Naive thymus-derived CD4-positive, alpha-beta T cell (primary cell): ENCODE measurements at regions of chr9 and their contacts with region 1.

Region 1: DNA sequence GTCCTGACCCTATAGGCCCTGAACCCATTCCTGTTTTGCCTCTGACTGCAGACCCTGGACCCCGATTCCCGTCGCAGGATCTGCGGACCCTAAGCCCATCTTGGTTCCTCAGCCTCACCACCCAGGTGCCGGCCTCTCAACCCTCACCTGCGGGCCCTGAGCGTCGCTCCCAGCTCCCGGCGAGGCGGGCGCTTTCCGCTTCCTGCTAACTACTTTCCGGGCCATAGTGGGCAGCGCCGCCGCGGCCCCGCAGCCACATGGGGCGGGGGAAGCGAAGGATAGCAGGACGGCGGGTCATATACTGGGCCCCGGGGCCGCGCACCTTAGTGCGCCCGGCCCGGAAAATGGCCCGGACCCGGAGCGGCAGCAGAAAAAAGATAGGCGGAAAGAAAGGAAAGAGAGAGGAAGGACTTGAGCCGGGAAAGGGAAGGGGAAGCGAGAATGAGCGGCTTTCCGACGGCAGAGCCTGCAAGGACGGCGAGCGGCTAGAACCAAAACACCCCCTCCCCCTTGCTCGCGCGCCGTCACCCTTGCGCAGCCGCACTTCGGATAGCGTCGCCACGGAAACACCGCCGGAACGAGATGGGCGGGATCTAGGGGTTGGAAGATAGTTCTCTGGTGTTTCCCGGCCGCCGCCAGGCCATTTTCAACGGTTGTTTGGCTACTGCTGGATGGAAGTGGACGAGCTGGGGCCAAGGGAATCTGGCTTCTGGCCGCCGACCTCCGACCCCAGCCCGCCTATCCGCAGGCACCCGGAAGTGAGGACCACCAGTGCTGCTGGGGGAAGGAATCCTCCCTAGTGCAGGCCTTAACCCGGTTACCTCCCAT is at the start of gene DCAF12:
- DNase-seq: peak; percentile 84 to 92 (median 89)
- ATAC-seq: peak; percentile 96
- H3K4me3 ChIP-seq: peak within 1 kb of the TSS; percentile 92
- H3K4me3 Mint-ChIP-seq: peak within 1 kb of the TSS; percentile 92 to 99 (median 98)
- H3K27ac ChIP-seq: peak within 1 kb of the TSS; percentile 93
- H3K27ac Mint-ChIP-seq: peak within 1 kb of the TSS; percentile 94 to 99 (median 98)
- H3K4me1 ChIP-seq: peaks cover 24 to 34% of the 10 kb centered on the region in 2 donors
- H3K4me1 Mint-ChIP-seq: peaks cover 39 to 56% (median 44%) of the 10 kb centered on the region in 7 donors
- H3K27me3 ChIP-seq: no peaks in the 10 kb centered on the region
- H3K27me3 Mint-ChIP-seq: peaks cover 0 to 2% (median 0%) of the 10 kb centered on the region in 5 donors
- total RNA-seq, gene DCAF12: 10.8 to 40.4 (median 28.5) TPM

Region 2: DNA sequence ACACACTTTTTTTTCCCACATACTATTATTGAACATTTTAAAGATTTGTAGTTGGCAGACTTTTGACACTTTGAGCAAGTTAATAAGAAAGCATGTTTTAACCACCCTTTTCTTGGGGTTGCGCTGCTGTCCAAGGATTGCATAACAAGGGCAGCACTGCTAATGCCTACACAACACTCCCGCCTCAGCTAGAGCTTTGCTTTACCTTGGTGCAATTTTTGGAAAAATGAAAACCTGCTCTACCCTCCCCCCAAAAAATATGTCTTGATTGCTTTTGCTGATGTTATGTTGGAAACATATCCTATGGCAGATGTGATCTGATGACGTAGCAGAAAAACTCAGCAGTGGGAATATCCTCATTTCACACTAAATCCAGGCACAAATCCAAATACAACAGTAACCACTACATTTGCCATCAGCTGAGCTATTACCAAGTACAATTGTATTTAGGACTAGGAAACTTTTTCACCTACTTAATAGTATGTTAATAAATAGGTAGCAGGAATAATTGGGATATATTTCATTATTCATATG is 257.9 kb before region 1 on chr9:
- CTCF ChIA-PET with region 1: no interaction called
- POLR2A ChIA-PET with region 1: no interaction called
- intact Hi-C with region 1: no loop called
- DNase-seq: no peak
- ATAC-seq: no peak
- H3K4me3 ChIP-seq: no peak overlapping the region
- H3K4me3 Mint-ChIP-seq: no peak overlapping the region
- H3K27ac ChIP-seq: no peak overlapping the region
- H3K27ac Mint-ChIP-seq: peak overlapping the region in 1 of 9 donors; percentile 8
- H3K4me1 ChIP-seq: no peaks in the 10 kb centered on the region
- H3K4me1 Mint-ChIP-seq: peaks cover 13 to 39% (median 36%) of the 10 kb centered on the region in 7 donors
- H3K27me3 ChIP-seq: no peaks in the 10 kb centered on the region
- H3K27me3 Mint-ChIP-seq: no peaks in the 10 kb centered on the region

Region 3: GRCh38 chr9:34158362-34158869 is 32.0 kb after region 1 on chr9:
- CTCF ChIA-PET with region 1: no interaction called
- POLR2A ChIA-PET with region 1: no interaction called
- intact Hi-C with region 1: loop called in 1 of 2 experiments (anchors 1 kb)
- DNase-seq: no peak
- ATAC-seq: no peak
- H3K4me3 ChIP-seq: no peak overlapping the region
- H3K4me3 Mint-ChIP-seq: no peak overlapping the region
- H3K27ac ChIP-seq: no peak overlapping the region
- H3K27ac Mint-ChIP-seq: no peak overlapping the region
- H3K4me1 ChIP-seq: no peaks in the 10 kb centered on the region
- H3K4me1 Mint-ChIP-seq: no peaks in the 10 kb centered on the region
- H3K27me3 ChIP-seq: no peaks in the 10 kb centered on the region
- H3K27me3 Mint-ChIP-seq: peaks cover 0 to 9% (median 0%) of the 10 kb centered on the region in 5 donors

Region 4: DNA sequence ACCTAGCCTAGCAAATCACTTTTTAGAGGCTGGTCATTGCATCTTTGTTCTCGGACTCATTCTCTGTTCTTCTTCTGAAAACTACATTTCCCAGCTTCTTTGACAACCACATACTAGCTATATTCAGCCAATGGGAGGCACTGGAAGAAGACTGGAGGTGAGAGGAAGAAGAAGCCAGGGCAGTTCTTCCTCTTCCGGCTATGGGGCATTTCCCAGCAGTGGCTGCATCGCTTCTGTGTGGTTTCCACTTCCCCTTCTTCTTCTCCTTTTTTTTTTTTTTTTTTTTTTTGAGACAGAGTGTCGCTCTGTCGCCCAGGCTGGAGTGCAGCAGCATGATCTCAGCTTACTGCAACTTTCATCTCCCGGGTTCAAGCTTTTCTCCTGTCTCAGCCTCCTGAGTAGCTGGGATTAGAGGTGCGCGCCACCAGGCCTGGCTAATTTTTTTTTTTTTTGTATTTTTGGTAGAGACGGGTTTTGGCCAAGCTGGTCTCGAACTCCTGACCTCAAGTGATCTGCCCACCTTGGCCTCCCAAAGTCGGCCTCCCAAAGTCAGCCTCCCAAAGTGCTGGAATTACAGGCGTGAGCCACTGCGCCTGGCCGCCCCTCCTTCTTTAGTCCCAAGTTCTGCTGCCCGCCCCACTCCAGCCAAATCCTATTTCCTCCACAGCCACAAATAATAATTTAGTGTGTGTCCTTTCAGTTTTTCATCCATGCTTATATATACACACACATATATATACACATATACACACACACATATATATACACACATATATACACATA is 45.5 kb after region 1 on chr9:
- CTCF ChIA-PET with region 1: no interaction called
- POLR2A ChIA-PET with region 1: interaction called, 3 read pairs
- intact Hi-C with region 1: loop called in 1 of 2 experiments (anchors 2 kb)
- DNase-seq: peak in 7 of 9 donors; percentile 36 to 80 (median 65)
- ATAC-seq: peak; percentile 99
- H3K4me3 ChIP-seq: peak overlapping the region; percentile 28
- H3K4me3 Mint-ChIP-seq: peak overlapping the region; percentile 41 to 89 (median 70)
- H3K27ac ChIP-seq: peak overlapping the region; percentile 26
- H3K27ac Mint-ChIP-seq: peak overlapping the region; percentile 55 to 92 (median 85)
- H3K4me1 ChIP-seq: peaks cover 0 to 8% of the 10 kb centered on the region in 2 donors
- H3K4me1 Mint-ChIP-seq: peaks cover 5 to 19% (median 13%) of the 10 kb centered on the region in 7 donors
- H3K27me3 ChIP-seq: no peaks in the 10 kb centered on the region
- H3K27me3 Mint-ChIP-seq: no peaks in the 10 kb centered on the region

Region 5: GRCh38 chr9:34178520-34179212 is 52.2 kb after region 1 on chr9 and contains the start of gene UBAP1:
- CTCF ChIA-PET with region 1: no interaction called
- POLR2A ChIA-PET with region 1: interaction called, 4 read pairs
- intact Hi-C with region 1: loop called (anchors 1 kb)
- DNase-seq: peak; percentile 83 to 97 (median 93)
- ATAC-seq: peak; percentile 99
- H3K4me3 ChIP-seq: peak within 1 kb of the TSS; percentile 93
- H3K4me3 Mint-ChIP-seq: peak within 1 kb of the TSS; percentile 93 to 100 (median 96)
- H3K27ac ChIP-seq: peak within 1 kb of the TSS; percentile 97
- H3K27ac Mint-ChIP-seq: peak within 1 kb of the TSS; percentile 94 to 99 (median 98)
- H3K4me1 ChIP-seq: peaks cover 0 to 8% of the 10 kb centered on the region in 2 donors
- H3K4me1 Mint-ChIP-seq: peaks cover 7 to 33% (median 21%) of the 10 kb centered on the region in 7 donors
- H3K27me3 ChIP-seq: no peaks in the 10 kb centered on the region
- H3K27me3 Mint-ChIP-seq: no peaks in the 10 kb centered on the region
- total RNA-seq, gene UBAP1: 31.1 to 39.9 (median 32.8) TPM

Region 6: GRCh38 chr9:34252670-34253459 is 126.4 kb after region 1 on chr9:
- CTCF ChIA-PET with region 1: interaction called, 3 read pairs
- POLR2A ChIA-PET with region 1: no interaction called
- intact Hi-C with region 1: loop called (anchors 1 kb)
- DNase-seq: peak; percentile 38 to 70 (median 56)
- ATAC-seq: peak; percentile 85
- H3K4me3 ChIP-seq: no peak overlapping the region
- H3K4me3 Mint-ChIP-seq: no peak overlapping the region
- H3K27ac ChIP-seq: no peak overlapping the region
- H3K27ac Mint-ChIP-seq: peak overlapping the region in 7 of 9 donors; percentile 15 to 69 (median 46)
- H3K4me1 ChIP-seq: peaks cover 0 to 6% of the 10 kb centered on the region in 2 donors
- H3K4me1 Mint-ChIP-seq: peaks cover 9 to 21% (median 17%) of the 10 kb centered on the region in 7 donors
- H3K27me3 ChIP-seq: no peaks in the 10 kb centered on the region
- H3K27me3 Mint-ChIP-seq: no peaks in the 10 kb centered on the region